Activated naive CD4-positive, alpha-beta T cell treated with anti-CD3 and anti-CD28 coated beads for 36 hours (primary cell): ENCODE measurements at regions of chr1 and their contacts with region 1.

Region 1: DNA sequence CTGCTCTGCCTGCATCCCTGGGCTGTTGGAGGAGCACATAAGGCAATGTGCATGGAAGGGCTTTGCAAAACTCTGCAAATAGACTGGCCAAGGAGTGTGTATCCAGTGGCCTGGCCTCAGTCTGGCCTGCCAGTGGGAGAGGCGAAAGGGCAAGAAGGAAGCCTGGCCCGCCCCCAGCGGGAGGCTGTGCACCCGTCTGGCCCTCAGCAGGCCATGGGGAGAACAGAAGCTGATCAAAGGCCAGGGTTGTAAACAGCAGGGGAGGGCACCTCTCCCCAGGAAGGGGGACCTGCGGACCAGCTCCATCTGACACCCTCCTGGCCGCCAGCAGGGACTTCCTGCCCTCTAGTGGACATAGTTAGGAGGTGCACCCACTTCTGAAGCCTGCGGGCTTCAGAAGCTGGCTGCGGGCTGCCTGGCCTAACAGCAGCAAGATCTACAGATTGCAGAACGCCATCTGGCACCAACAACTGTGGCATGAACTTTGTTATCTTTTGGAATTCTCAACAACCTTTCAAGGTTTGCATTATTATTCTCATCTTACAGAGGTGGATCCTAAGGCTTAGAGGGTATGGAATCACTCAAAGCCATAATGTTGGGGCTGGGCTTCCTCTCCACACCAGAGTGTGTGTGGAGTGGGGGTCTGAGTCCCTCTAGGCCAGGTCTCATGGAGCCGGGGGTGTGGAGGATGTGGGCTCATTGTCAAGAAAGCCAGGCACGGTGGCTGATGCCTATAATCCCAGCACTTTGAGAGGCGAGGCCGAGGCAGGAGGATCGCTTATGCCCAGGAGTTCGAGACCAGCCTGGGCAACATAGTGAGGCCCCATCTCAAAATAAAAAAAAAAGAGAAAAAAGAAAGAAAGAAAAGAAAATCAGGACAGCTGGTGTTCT is 18.9 kb upstream of the CDK18 start:
- DNase-seq: peak; percentile 79
- H3K4me3 Mint-ChIP-seq: no peak overlapping the region
- H3K27ac Mint-ChIP-seq: no peak overlapping the region
- H3K4me1 Mint-ChIP-seq: peaks cover 12% of the 10 kb centered on the region
- H3K27me3 Mint-ChIP-seq: peaks cover 58% of the 10 kb centered on the region

Region 2: GRCh38 chr1:205273551-205273982 is 212.0 kb before region 1 on chr1:
- CTCF ChIA-PET with region 1: interaction called, 12 read pairs
- intact Hi-C with region 1: loop called (anchors 5 kb)
- DNase-seq: peak; percentile 94
- H3K4me3 Mint-ChIP-seq: no peak overlapping the region
- H3K27ac Mint-ChIP-seq: peak overlapping the region; percentile 27
- H3K4me1 Mint-ChIP-seq: peaks cover 51% of the 10 kb centered on the region
- H3K27me3 Mint-ChIP-seq: no peaks in the 10 kb centered on the region

Region 3: DNA sequence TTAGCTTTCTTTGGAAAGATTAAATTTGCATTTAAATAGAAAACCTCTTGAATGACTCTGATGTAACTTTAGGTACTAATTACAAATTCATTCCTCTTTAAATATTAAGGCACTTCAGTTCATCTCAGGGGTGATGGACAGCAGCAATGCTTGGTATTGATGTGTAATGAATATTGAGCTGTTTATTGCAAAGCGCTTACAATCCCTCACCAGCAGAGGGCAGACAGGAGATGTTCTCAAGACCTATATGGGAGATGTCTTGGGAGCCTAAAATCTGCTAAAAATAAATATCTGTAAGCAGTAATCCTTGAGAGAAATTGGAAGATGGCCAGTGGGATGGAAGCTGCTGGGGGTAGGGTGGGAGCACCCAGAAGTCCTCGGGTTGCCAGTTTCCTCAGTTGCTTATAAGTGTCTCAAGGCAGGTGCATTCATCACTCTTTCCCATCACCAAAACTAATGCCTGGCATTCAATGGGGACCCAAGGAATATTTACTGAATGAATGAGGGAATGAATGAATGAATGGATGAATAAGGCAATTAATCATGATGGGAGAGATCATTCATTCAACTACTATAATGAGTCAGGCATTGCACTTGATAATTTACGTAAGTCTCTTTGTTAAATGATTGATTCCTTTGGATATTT is 131.2 kb before region 1 on chr1:
- CTCF ChIA-PET with region 1: interaction called, 85 read pairs
- intact Hi-C with region 1: loop called (anchors 1 kb)
- DNase-seq: peak; percentile 82
- H3K4me3 Mint-ChIP-seq: no peak overlapping the region
- H3K27ac Mint-ChIP-seq: no peak overlapping the region
- H3K4me1 Mint-ChIP-seq: no peaks in the 10 kb centered on the region
- H3K27me3 Mint-ChIP-seq: no peaks in the 10 kb centered on the region

Region 4: GRCh38 chr1:205422993-205423625 is 62.5 kb before region 1 on chr1:
- CTCF ChIA-PET with region 1: interaction called, 21 read pairs
- intact Hi-C with region 1: no loop called
- DNase-seq: no peak
- H3K4me3 Mint-ChIP-seq: no peak overlapping the region
- H3K27ac Mint-ChIP-seq: no peak overlapping the region
- H3K4me1 Mint-ChIP-seq: no peaks in the 10 kb centered on the region
- H3K27me3 Mint-ChIP-seq: peaks cover 3% of the 10 kb centered on the region

Region 5: GRCh38 chr1:205458777-205459566 is 26.6 kb before region 1 on chr1:
- CTCF ChIA-PET with region 1: interaction called, 12 read pairs
- intact Hi-C with region 1: loop called (anchors 1 kb)
- DNase-seq: peak; percentile 69
- H3K4me3 Mint-ChIP-seq: no peak overlapping the region
- H3K27ac Mint-ChIP-seq: no peak overlapping the region
- H3K4me1 Mint-ChIP-seq: peaks cover 10% of the 10 kb centered on the region
- H3K27me3 Mint-ChIP-seq: peaks cover 42% of the 10 kb centered on the region

Region 6: GRCh38 chr1:205523891-205524793 is 38.6 kb after region 1 on chr1:
- CTCF ChIA-PET with region 1: interaction called, 221 read pairs
- intact Hi-C with region 1: loop called (anchors 1 kb)
- DNase-seq: peak; percentile 88
- H3K4me3 Mint-ChIP-seq: no peak overlapping the region
- H3K27ac Mint-ChIP-seq: no peak overlapping the region
- H3K4me1 Mint-ChIP-seq: no peaks in the 10 kb centered on the region
- H3K27me3 Mint-ChIP-seq: no peaks in the 10 kb centered on the region